Breast epithelium (tissue), 4 donors: ENCODE measurements at regions of chr5 and their contacts with region 1.

Region 1: DNA sequence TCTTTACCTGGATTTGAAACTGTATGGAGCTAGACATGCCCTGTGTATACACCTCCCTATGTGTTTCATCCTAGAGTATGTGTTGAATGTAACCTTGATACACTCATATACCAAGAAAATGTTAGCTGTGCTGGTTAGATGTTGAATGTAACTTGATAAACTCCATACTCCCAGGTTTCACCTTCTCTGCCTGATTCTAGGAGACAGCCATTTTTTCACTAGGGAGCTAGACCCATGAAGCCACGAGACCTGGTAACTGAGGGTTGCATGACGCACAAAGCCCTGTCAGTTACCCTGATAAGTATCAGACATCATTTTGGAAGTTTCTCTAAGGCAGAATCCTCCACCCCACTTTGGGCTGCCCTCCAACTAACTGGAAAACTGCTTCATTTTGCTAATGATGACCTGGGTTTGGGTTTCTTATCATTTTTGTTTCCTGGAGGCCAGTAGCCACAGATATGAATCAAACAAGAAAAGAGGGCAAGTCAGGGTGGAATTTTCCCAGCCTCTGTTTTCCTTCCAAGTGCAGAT is 478.5 kb upstream of the KIF2A start:
- DNase-seq: no peak
- H3K4me3 ChIP-seq: no peak overlapping the region
- H3K27ac ChIP-seq: no peak overlapping the region
- H3K4me1 ChIP-seq: no peaks in the 10 kb centered on the region
- H3K27me3 ChIP-seq: no peaks in the 10 kb centered on the region
- CTCF ChIP-seq: no peak
- POLR2A ChIP-seq: no peak

Region 2: GRCh38 chr5:61840361-61840760 is 12.9 kb after region 1 on chr5:
- intact Hi-C with region 1: loop called (anchors 1 kb)
- DNase-seq: no peak
- H3K4me3 ChIP-seq: no peak overlapping the region
- H3K27ac ChIP-seq: no peak overlapping the region
- H3K4me1 ChIP-seq: no peaks in the 10 kb centered on the region
- H3K27me3 ChIP-seq: no peaks in the 10 kb centered on the region
- CTCF ChIP-seq: no peak
- POLR2A ChIP-seq: no peak